GM18951 (cell line): ENCODE measurements at regions of chr4 and their contacts with region 1.

Region 1: GRCh38 chr4:89226665-89227574 is 80.7 kb downstream of the GPRIN3 start:
- POLR2A ChIP-seq: no peak

Region 2: GRCh38 chr4:89434364-89434988 is 207.6 kb after region 1 on chr4:
- in situ Hi-C with region 1: loop called (anchors 25 kb)
- POLR2A ChIP-seq: no peak